ENCODE measurements at regions of chr2 and their contacts with region 1.

Region 1: DNA sequence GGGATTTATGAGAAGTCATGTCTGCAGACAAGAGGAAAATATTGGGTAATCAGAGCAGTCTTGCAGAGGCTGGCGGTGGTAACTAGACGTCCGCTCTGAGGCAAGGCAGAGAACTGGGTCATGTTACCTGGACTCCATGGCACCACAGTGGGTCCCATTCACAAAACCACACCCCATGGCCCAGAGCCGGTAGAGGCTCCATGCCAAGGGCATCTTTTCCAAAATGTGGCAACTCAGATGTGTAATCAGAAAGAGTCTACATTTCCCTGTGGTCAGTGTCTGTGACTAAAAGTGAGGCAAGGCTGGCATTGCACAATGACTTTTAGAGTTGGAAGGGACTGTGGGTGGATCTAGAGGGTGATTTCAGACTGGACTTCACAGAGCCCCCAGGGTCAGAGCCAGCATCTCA is 113.1 kb downstream of the MREG start:
- DNase-seq: peak; percentile 100
- H3K4me3 Mint-ChIP-seq: no peak overlapping the region
- H3K27ac Mint-ChIP-seq: peak overlapping the region; percentile 41
- H3K4me1 Mint-ChIP-seq: peaks cover 51% of the 10 kb centered on the region
- H3K27me3 Mint-ChIP-seq: no peaks in the 10 kb centered on the region
- CTCF ChIP-seq: no peak

Region 2: DNA sequence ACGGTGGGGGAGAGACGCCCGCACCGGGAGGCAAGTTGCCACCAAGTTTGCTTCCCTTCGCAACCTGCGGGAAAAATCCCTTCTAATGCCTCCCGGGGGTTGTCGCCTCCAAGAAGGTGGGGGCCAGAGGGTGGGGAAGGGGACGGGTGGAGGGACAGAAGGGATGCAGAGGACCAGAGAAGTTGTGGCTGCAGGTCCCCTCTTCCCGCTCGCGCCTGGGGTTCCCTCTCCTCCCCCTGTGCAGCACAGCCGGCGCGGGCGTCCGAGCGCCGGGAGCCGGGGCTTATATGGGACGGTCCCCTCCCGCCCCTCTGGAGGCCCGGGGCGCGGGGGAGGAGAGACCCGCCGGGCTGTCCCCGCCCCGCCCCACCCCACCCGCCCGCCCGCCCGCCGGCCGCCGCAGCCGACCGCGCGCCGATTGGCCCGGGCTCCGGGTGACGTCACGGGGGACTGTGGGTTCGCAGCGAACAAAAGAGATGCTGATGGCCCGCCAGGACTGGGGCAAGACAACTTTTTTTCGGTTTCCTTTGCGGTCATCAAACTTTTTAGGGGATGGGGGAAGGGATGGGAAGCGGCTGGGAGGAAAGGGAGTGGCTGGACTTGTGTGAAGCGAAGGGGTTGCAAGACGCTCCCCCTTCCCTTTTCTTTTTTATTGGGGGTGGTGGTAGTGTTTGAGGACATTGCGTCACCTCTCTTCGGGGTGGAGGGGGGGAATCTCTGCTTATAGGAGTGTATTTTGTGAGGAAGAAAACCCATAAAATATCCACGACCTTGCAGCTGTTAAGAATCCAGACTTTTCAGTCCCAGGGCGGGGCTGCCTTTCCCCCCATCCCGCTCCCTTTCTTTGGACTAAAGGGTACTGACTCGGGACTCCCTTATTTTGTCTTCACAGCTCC is 464.1 kb before region 1 on chr2 and contains the start of gene FN1:
- CTCF ChIA-PET with region 1: no interaction called
- POLR2A ChIA-PET with region 1: no interaction called
- intact Hi-C with region 1: no loop called
- DNase-seq: peak; percentile 76
- H3K4me3 Mint-ChIP-seq: peak within 1 kb of the TSS; percentile 78
- H3K27ac Mint-ChIP-seq: peak within 1 kb of the TSS; percentile 57
- H3K4me1 Mint-ChIP-seq: peaks cover 28% of the 10 kb centered on the region
- H3K27me3 Mint-ChIP-seq: no peaks in the 10 kb centered on the region
- CTCF ChIP-seq: no peak
- total RNA-seq, gene FN1: 564 and 636 TPM in 2 replicates

Region 3: DNA sequence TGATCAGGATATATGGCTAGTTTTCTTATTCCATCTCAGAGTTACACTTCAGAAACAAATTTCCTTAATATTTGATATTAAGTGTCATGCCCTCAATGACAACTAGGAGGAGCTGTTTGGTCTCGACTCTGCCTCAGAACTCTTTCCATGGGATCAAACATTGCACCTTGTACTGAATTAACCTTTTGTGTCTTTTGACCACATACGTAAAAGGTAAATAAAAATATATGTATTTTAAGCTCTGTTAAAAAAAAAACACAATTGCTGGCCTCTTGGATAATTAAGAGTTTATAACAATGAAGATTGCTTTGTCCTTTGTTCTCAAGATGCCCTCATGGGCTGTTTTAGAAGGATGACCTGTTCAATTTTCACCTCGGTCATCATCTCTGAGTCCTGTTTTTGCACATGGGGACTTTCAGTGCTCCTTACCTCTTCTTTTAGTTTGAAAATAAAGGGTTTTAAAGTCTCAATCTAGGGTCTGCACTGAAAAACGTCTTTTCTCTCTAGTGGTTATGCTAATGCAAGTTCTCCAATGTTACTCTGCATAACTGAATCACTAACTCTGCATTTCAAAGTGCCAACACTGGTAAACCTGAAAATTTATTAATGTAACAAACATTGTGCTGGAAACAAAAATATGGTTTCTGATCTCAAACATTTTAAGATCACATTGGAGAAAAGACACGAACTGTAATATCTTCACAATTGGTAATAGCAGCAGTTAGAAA is 445.5 kb before region 1 on chr2:
- CTCF ChIA-PET with region 1: interaction called, 3 read pairs
- POLR2A ChIA-PET with region 1: interaction called, 3 read pairs
- intact Hi-C with region 1: loop called (anchors 5 kb)
- DNase-seq: peak; percentile 52
- H3K4me3 Mint-ChIP-seq: no peak overlapping the region
- H3K27ac Mint-ChIP-seq: peak overlapping the region; percentile 49
- H3K4me1 Mint-ChIP-seq: peaks cover 8% of the 10 kb centered on the region
- H3K27me3 Mint-ChIP-seq: no peaks in the 10 kb centered on the region
- CTCF ChIP-seq: peak; percentile 66

Region 4: GRCh38 chr2:215751200-215751910 is 148.9 kb before region 1 on chr2:
- CTCF ChIA-PET with region 1: no interaction called
- POLR2A ChIA-PET with region 1: interaction called, 3 read pairs
- intact Hi-C with region 1: loop called (anchors 5 kb)
- DNase-seq: peak; percentile 67
- H3K4me3 Mint-ChIP-seq: no peak overlapping the region
- H3K27ac Mint-ChIP-seq: no peak overlapping the region
- H3K4me1 Mint-ChIP-seq: peaks cover 18% of the 10 kb centered on the region
- H3K27me3 Mint-ChIP-seq: no peaks in the 10 kb centered on the region
- CTCF ChIP-seq: no peak

Measured in MCF 10A (cell line).